Naive thymus-derived CD4-positive, alpha-beta T cell (primary cell): ENCODE measurements at regions of chr22 and their contacts with region 1.

Region 1: DNA sequence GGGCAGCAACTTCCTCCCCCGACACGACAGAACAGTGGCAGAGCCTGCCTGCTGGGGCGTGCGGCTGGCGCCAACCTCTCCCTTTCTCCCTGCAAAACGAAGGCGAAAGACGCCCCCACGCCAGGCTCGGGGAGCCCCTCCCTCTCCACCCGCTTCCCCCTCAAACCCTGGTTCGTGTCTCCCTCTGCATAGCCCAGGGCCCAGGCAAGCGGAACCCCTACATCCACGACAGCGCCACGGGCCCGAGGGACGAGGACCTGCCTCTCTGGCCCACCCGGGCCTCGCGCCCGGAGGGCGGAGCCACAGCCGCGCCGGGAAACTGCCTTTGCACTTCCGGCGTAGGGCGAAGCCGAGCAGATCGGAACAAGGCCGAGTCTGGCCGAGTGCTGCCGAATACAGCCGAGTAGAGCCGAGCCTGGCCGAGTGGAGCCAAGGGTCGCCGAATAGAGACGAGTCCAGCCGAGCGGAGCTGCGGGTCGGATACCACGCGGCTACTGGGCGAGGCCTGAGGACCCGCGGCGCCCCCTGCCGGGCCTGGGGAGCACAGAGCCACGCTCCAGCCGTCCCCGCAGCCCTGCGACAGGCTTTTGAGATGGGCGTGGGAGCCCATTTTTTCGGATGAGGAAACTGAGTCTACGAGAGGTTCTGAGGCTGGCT is 11.2 kb upstream of the C1QTNF6 start:
- DNase-seq: peak; percentile 94 to 100 (median 99)
- ATAC-seq: peak; percentile 98
- H3K4me3 ChIP-seq: peak overlapping the region; percentile 90
- H3K4me3 Mint-ChIP-seq: peak overlapping the region; percentile 80 to 90 (median 86)
- H3K27ac ChIP-seq: peak overlapping the region; percentile 86
- H3K27ac Mint-ChIP-seq: peak overlapping the region; percentile 87 to 99 (median 96)
- H3K4me1 ChIP-seq: peaks cover 24 to 33% of the 10 kb centered on the region in 2 donors
- H3K4me1 Mint-ChIP-seq: peaks cover 19 to 60% (median 41%) of the 10 kb centered on the region in 7 donors
- H3K27me3 ChIP-seq: no peaks in the 10 kb centered on the region
- H3K27me3 Mint-ChIP-seq: no peaks in the 10 kb centered on the region

Region 2: DNA sequence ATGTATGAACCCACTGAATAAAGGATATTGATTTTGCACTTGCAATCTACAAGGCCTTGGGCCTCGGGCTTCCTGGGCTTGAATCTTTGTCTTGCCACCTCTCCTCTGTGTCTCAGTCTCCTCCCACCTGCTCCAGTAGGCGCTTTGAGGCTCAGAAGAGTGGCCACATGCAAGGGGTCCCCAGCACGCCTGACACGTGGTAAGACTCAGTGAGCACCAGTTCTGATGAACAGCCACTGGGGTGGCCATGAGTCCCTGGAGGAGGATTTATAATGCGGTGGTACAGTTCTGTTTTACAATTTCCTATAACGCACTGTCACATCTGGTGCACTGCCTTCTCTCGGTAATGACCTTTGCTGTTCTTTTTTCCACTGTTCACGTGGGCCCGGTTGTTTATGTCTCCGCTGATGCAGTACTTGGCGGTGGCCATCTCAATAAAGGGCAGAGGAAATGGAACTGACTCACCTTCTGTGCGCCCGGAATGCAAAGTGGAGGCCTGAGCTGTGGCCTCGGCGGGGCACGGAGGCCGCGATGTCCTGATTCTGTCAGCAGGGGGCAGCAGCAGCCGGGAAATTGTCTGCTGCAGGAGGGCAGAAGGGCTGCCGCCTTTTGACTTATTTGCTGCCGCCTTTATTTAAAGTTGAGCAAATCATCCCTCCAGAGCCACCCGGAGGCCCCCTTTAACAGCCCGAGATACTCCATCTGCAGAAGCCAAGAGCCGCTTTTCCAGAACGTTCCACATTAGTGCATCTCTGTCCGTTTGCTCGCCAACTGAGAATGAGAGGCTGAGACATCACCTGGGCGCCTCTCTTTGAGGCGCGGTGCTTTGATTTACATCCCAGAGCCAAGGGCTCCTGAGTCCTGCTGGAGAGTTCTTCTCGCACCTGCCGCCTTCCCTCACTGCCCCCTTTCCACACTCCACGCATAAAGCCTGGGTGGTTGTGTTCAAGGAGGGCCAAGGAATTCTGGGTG is 417.3 kb before region 1 on chr22:
- CTCF ChIA-PET with region 1: interaction called, 3 read pairs
- POLR2A ChIA-PET with region 1: no interaction called
- intact Hi-C with region 1: loop called (anchors 1 kb)
- DNase-seq: peak; percentile 66 to 92 (median 80)
- ATAC-seq: peak; percentile 98
- H3K4me3 ChIP-seq: no peak overlapping the region
- H3K4me3 Mint-ChIP-seq: peak overlapping the region in 4 of 10 donors; percentile 8 to 57 (median 43)
- H3K27ac ChIP-seq: no peak overlapping the region
- H3K27ac Mint-ChIP-seq: peak overlapping the region in 5 of 9 donors; percentile 27 to 72 (median 58)
- H3K4me1 ChIP-seq: peaks cover 4 to 10% of the 10 kb centered on the region in 2 donors
- H3K4me1 Mint-ChIP-seq: peaks cover 9 to 34% (median 18%) of the 10 kb centered on the region in 7 donors
- H3K27me3 ChIP-seq: no peaks in the 10 kb centered on the region
- H3K27me3 Mint-ChIP-seq: peaks cover 0 to 11% (median 7%) of the 10 kb centered on the region in 5 donors

Region 3: DNA sequence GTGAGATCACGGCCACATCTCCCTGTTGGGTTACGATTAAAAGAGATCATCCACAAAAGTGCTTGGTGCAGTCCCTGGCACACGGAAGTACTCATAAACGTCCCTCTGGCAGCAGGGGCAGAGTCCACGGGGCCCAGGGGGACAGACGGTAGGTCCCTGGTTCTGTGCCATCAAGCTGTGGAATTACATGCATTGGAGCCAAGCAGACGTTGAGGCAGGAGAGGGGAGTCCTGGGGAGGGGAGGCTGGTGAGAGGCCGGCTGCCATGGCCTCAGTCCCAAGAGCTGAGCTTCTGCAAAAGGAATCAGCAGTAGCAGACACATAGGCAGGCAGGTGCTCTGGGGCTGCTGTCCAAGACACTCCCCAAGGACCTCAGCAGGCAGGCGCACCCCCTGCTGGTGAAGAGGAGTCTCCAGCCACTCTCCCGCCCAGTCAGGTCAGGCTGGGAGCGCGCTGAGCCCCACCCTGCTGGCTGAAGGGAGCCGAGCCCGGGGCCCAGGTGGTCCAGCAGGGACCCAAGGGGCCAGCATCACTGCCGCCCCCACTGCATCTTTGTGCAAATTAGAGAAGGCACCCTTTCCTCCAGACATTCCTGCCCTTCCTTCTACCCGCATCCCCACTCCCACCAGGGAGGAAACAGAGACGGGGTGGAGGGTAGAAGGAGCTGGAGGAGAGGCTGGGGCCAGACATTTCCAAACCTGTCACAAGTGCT is 155.2 kb before region 1 on chr22:
- CTCF ChIA-PET with region 1: no interaction called
- POLR2A ChIA-PET with region 1: no interaction called
- intact Hi-C with region 1: loop called in 1 of 2 experiments (anchors 1 kb)
- DNase-seq: peak in 2 of 9 donors; percentile 16 to 64
- ATAC-seq: peak; percentile 74
- H3K4me3 ChIP-seq: no peak overlapping the region
- H3K4me3 Mint-ChIP-seq: no peak overlapping the region
- H3K27ac ChIP-seq: no peak overlapping the region
- H3K27ac Mint-ChIP-seq: no peak overlapping the region
- H3K4me1 ChIP-seq: no peaks in the 10 kb centered on the region
- H3K4me1 Mint-ChIP-seq: peaks cover 0 to 25% (median 0%) of the 10 kb centered on the region in 7 donors
- H3K27me3 ChIP-seq: no peaks in the 10 kb centered on the region
- H3K27me3 Mint-ChIP-seq: peaks cover 0 to 9% (median 0%) of the 10 kb centered on the region in 5 donors

Region 4: GRCh38 chr22:37148742-37149665 is 50.2 kb before region 1 on chr22:
- CTCF ChIA-PET with region 1: interaction called, 5 read pairs
- POLR2A ChIA-PET with region 1: interaction called, 7 read pairs
- intact Hi-C with region 1: loop called (anchors 1 kb)
- DNase-seq: peak in 1 of 9 donors; percentile 37
- ATAC-seq: no peak
- H3K4me3 ChIP-seq: peak overlapping the region; percentile 69
- H3K4me3 Mint-ChIP-seq: peak overlapping the region; percentile 70 to 91 (median 86)
- H3K27ac ChIP-seq: peak overlapping the region; percentile 84
- H3K27ac Mint-ChIP-seq: peak overlapping the region; percentile 92 to 99 (median 95)
- H3K4me1 ChIP-seq: peaks cover 40 to 46% of the 10 kb centered on the region in 2 donors
- H3K4me1 Mint-ChIP-seq: peaks cover 36 to 82% (median 64%) of the 10 kb centered on the region in 7 donors
- H3K27me3 ChIP-seq: no peaks in the 10 kb centered on the region
- H3K27me3 Mint-ChIP-seq: no peaks in the 10 kb centered on the region

Region 5: DNA sequence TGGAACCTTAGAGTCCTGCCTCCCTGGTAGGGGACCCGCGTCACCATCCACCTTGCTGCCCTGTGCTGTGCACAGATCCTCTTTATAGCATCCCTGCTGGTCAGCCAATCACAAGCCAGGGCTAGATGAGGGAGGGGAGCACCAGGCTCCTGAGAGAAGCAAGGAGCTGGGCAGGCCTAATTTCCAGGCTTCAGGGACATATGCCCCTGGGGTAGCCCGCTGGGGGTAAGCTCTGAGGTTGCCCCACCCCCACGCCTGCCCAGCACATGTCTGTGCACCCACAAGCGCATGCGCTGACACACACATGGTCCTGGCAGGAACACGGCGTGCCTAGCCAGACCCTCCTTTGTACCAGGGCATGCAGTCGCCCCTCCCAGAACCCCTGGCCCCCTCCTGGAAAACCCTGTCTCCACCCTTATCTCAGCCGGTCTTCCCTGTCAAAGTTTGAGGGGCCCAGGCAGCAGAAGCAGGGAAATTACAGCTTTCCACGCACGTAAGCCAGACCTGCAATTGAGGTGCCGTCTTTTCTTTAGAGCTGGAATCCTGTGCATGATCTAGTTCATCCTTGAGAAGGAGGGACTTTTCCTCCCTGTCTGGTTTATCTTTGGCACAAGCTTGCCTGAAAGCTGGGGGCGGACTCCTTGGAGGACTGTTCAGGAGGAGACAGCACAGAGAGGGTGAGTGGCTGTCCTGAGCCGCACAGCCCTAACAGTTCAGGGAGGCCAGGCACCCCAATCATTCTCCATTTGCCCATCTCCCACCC is 11.0 kb after region 1 on chr22:
- CTCF ChIA-PET with region 1: interaction called, 39 read pairs
- POLR2A ChIA-PET with region 1: interaction called, 256 read pairs
- intact Hi-C with region 1: loop called in 1 of 2 experiments (anchors 1 kb)
- DNase-seq: no peak
- ATAC-seq: no peak
- H3K4me3 ChIP-seq: no peak overlapping the region
- H3K4me3 Mint-ChIP-seq: no peak overlapping the region
- H3K27ac ChIP-seq: peak overlapping the region; percentile 11
- H3K27ac Mint-ChIP-seq: peak overlapping the region; percentile 19 to 94 (median 80)
- H3K4me1 ChIP-seq: peaks cover 0 to 24% of the 10 kb centered on the region in 2 donors
- H3K4me1 Mint-ChIP-seq: peaks cover 22 to 85% (median 75%) of the 10 kb centered on the region in 7 donors
- H3K27me3 ChIP-seq: no peaks in the 10 kb centered on the region
- H3K27me3 Mint-ChIP-seq: no peaks in the 10 kb centered on the region

Region 6: DNA sequence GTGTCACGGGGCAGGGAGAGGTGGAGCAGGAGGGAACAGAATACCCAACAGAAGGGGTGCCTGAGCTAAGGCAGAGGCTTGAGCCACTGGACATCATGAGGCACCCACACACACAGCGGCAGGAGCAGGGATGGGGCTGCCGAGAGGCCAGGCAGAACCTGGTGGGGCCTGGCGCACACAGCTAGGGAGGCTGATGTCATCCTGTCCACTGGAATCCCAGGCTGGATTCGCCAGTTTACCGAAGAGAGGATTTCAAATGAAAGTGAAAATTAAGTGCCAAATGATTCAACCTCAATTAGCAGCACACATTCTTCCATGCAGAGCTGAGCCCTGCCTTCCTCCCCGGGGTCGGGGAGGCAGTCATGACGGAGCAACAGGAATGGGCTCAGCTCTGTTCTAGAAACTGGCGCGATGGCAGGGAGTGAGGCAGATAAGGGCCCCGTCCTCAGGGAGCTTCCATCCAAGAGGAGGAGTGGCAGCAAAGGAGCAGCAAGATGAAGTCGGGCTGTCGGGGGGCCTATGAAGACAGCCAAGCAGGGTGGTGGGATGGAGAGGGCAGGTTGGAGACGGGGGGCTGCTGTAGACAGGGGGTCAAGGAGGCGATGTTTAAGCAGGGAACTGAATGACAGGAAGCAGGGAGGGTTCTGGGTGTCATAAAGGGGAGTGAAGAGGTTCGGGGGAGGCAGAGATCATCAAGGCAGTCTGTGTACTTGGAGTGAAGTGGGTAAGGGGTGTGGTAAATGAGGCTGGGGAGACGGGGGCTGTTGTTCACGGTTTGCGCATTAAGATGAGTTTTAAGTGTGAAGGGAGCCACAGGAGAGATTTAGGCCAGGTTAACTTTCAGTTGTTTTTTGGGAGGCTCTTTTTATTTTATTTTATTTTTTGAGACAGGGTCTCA is 38.4 kb after region 1 on chr22:
- CTCF ChIA-PET with region 1: interaction called, 18 read pairs
- POLR2A ChIA-PET with region 1: interaction called, 278 read pairs
- intact Hi-C with region 1: loop called in 1 of 2 experiments (anchors 1 kb)
- DNase-seq: peak in 6 of 9 donors; percentile 21 to 63 (median 46)
- ATAC-seq: no peak
- H3K4me3 ChIP-seq: peak overlapping the region; percentile 49
- H3K4me3 Mint-ChIP-seq: peak overlapping the region; percentile 85 to 99 (median 92)
- H3K27ac ChIP-seq: peak overlapping the region; percentile 86
- H3K27ac Mint-ChIP-seq: peak overlapping the region; percentile 93 to 100 (median 98)
- H3K4me1 ChIP-seq: peaks cover 87 to 90% of the 10 kb centered on the region in 2 donors
- H3K4me1 Mint-ChIP-seq: peaks cover 80 to 100% (median 95%) of the 10 kb centered on the region in 7 donors
- H3K27me3 ChIP-seq: no peaks in the 10 kb centered on the region
- H3K27me3 Mint-ChIP-seq: no peaks in the 10 kb centered on the region